ENCODE measurements at regions of chr3 and their contacts with region 1.

Region 1: DNA sequence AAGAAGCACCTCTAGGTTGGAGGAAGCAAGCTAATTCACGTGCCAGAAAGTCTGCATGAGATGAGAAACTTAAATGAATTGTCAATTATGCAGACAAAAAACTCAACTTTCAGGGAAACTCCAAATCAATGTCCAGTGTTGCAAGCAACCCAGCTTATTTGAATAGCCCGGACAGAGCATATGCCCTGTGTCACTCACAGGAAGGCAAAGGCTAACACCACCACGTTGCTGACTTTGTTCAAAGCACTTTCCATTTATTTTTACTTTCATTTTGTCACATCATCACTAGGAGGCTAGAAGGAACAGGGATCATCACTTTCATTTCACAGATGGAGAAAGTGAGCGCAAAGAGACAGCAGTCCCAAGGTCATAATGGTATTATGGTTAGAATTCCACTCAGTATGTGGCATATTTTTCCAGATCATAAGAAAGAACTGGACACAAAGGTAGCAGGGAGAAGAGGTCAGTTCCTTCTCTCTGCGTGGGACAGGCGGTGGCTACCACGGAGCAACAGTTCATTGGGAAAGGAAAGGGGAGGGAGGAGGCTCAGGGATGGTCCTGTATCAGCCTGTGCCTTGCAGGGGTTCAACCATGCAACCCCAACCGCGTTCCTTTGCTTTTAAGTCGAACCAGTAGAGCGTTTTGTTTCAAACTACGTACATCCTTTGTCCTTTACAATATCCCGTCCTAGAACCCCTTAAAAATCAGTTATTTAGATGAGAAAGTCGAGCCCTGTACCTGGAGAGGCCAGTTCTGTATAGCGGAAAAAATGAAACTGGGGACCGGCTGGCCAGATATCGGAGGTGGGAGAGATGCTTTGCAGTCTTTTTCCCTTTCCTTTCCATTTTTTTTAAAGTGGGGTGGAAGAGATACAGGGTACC is 1.1 kb downstream of the HEG1 start:
- DNase-seq: peak; percentile 62
- ATAC-seq: peak; percentile 61
- H3K4me3 ChIP-seq: peak overlapping the region; percentile 93
- H3K27ac ChIP-seq: peak overlapping the region; percentile 81
- H3K4me1 ChIP-seq: peaks cover 26% of the 10 kb centered on the region
- H3K27me3 ChIP-seq: no peaks in the 10 kb centered on the region
- CTCF ChIP-seq: no peak
- EP300 ChIP-seq: no peak
- POLR2A ChIP-seq: no peak
- RAD21 ChIP-seq: no peak

Region 2: GRCh38 chr3:124935264-124935663 is 119.4 kb before region 1 on chr3:
- CTCF ChIA-PET with region 1: interaction called, 3 read pairs
- POLR2A ChIA-PET with region 1: interaction called, 4 read pairs
- RAD21 ChIA-PET with region 1: interaction called, 39 read pairs
- SMC1A ChIA-PET with region 1: interaction called, 14 read pairs
- in situ Hi-C with region 1: no loop called
- intact Hi-C with region 1: no loop called
- DNase-seq: no peak
- ATAC-seq: peak; percentile 89
- H3K4me3 ChIP-seq: no peak overlapping the region
- H3K27ac ChIP-seq: no peak overlapping the region
- H3K4me1 ChIP-seq: no peaks in the 10 kb centered on the region
- H3K27me3 ChIP-seq: no peaks in the 10 kb centered on the region; a peak in 1 of 4 replicates
- CTCF ChIP-seq: no peak
- EP300 ChIP-seq: no peak
- POLR2A ChIP-seq: no peak
- RAD21 ChIP-seq: no peak

Region 3: GRCh38 chr3:125039131-125040100 is 15.3 kb before region 1 on chr3:
- CTCF ChIA-PET with region 1: interaction called, 10 read pairs
- POLR2A ChIA-PET with region 1: interaction called, 6 read pairs
- RAD21 ChIA-PET with region 1: no interaction called
- SMC1A ChIA-PET with region 1: interaction called, 7 read pairs
- in situ Hi-C with region 1: no loop called
- intact Hi-C with region 1: no loop called
- DNase-seq: no peak
- ATAC-seq: no peak
- H3K4me3 ChIP-seq: no peak overlapping the region
- H3K27ac ChIP-seq: no peak overlapping the region
- H3K4me1 ChIP-seq: peaks cover 4% of the 10 kb centered on the region
- H3K27me3 ChIP-seq: no peaks in the 10 kb centered on the region
- CTCF ChIP-seq: no peak
- EP300 ChIP-seq: no peak
- POLR2A ChIP-seq: no peak
- RAD21 ChIP-seq: no peak

Region 4: DNA sequence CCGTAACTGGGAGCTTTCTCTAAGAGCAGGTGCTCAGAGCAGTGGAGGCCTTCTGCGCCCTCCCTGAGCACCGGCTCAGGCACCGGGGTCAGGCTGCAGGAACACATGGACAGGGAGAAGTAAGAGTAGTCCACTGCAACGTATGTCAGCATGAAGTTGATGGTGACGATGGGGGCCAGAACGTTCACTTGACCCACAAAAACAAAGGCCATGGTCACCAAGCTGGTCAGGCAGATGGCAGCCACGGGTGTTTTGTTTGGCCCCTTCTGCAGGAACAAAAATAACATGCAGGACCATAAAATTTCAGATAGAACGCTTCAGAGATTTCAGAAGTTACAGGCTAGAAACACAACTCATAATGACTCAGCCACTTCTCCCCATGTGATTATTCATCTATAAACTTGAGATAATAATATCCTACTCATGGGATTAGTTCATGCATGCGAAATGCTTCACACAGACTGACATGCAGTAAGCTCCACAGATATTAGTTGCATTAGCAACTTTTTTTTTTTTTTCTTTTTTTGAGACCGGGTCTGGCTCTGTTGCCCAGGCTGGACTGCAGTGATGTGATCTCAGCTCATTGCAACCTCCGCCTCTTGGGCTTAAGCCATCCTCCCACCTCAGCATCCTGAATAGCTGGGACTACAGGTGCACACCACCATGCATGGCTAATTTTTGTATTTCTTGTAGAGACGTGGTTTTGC is 53.3 kb after region 1 on chr3:
- CTCF ChIA-PET with region 1: interaction called, 9 read pairs
- POLR2A ChIA-PET with region 1: interaction called, 4 read pairs
- RAD21 ChIA-PET with region 1: interaction called, 31 read pairs
- SMC1A ChIA-PET with region 1: interaction called, 33 read pairs
- in situ Hi-C with region 1: no loop called
- intact Hi-C with region 1: loop called (anchors 2 kb)
- DNase-seq: peak; percentile 86
- ATAC-seq: peak; percentile 73
- H3K4me3 ChIP-seq: peak overlapping the region; percentile 82
- H3K27ac ChIP-seq: peak overlapping the region; percentile 93
- H3K4me1 ChIP-seq: peaks cover 39% of the 10 kb centered on the region
- H3K27me3 ChIP-seq: no peaks in the 10 kb centered on the region
- CTCF ChIP-seq: no peak
- EP300 ChIP-seq: peak; percentile 8 to 65; a peak in 1 of 4 replicates
- POLR2A ChIP-seq: peak; percentile 62; the same call in 1 of the 2 replicates
- RAD21 ChIP-seq: no peak

Region 5: DNA sequence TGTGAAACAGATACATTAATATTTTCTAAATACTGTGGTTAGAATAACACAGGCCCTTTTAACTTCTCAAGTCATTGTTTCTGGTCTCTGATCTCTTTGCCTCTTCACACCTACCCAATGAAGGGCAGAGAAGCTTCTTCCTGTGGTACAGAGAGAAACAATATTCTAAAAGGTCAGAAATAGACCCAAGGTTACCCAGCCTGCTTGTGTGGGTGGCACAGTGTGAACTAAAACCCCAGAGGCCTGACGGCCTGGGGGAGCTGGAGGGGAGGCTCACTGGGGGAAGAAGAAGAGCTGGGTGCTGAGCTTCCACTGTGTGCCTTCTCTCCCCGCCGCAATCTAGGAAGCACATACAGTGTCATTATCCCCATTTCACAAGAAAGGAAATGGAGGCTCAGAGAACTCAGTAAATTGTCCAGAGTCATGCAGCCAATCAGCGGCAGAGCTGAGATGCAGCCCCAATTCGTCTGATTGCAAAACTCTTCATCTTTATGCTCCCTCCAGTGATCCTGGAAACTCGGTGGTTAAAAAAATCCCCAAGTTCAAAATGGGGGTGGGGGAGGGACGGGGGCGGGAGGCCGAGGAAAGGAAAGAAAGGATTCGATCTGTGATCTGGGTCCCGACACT is 65.2 kb after region 1 on chr3:
- CTCF ChIA-PET with region 1: interaction called, 4 read pairs
- POLR2A ChIA-PET with region 1: interaction called, 9 read pairs
- RAD21 ChIA-PET with region 1: interaction called, 18 read pairs
- SMC1A ChIA-PET with region 1: interaction called, 13 read pairs
- in situ Hi-C with region 1: no loop called
- intact Hi-C with region 1: no loop called
- DNase-seq: peak; percentile 87
- ATAC-seq: peak; percentile 80
- H3K4me3 ChIP-seq: peak overlapping the region; percentile 60
- H3K27ac ChIP-seq: peak overlapping the region; percentile 97
- H3K4me1 ChIP-seq: peaks cover 76% of the 10 kb centered on the region
- H3K27me3 ChIP-seq: no peaks in the 10 kb centered on the region
- CTCF ChIP-seq: no peak
- EP300 ChIP-seq: peak; percentile 18 to 68; a peak in 1 of 4 replicates
- POLR2A ChIP-seq: no peak; the same call in 1 of the 2 replicates
- RAD21 ChIP-seq: no peak

Region 6: GRCh38 chr3:125141596-125142419 is 87.1 kb after region 1 on chr3:
- CTCF ChIA-PET with region 1: interaction called, 6 read pairs
- POLR2A ChIA-PET with region 1: interaction called, 7 read pairs
- RAD21 ChIA-PET with region 1: interaction called, 9 read pairs
- SMC1A ChIA-PET with region 1: interaction called, 11 read pairs
- in situ Hi-C with region 1: no loop called
- intact Hi-C with region 1: loop called (anchors 2 kb)
- DNase-seq: no peak
- ATAC-seq: peak; percentile 88
- H3K4me3 ChIP-seq: peak overlapping the region; percentile 60; the same call in 1 of the 2 replicates
- H3K27ac ChIP-seq: peak overlapping the region; percentile 95
- H3K4me1 ChIP-seq: peaks cover 92% of the 10 kb centered on the region
- H3K27me3 ChIP-seq: no peaks in the 10 kb centered on the region
- CTCF ChIP-seq: peak; percentile 47 to 54 (median 54)
- EP300 ChIP-seq: peak; percentile 88; a peak in 3 of 4 replicates
- POLR2A ChIP-seq: peak; percentile 60; the same call in 1 of the 2 replicates
- RAD21 ChIP-seq: peak; percentile 46

Region 7: DNA sequence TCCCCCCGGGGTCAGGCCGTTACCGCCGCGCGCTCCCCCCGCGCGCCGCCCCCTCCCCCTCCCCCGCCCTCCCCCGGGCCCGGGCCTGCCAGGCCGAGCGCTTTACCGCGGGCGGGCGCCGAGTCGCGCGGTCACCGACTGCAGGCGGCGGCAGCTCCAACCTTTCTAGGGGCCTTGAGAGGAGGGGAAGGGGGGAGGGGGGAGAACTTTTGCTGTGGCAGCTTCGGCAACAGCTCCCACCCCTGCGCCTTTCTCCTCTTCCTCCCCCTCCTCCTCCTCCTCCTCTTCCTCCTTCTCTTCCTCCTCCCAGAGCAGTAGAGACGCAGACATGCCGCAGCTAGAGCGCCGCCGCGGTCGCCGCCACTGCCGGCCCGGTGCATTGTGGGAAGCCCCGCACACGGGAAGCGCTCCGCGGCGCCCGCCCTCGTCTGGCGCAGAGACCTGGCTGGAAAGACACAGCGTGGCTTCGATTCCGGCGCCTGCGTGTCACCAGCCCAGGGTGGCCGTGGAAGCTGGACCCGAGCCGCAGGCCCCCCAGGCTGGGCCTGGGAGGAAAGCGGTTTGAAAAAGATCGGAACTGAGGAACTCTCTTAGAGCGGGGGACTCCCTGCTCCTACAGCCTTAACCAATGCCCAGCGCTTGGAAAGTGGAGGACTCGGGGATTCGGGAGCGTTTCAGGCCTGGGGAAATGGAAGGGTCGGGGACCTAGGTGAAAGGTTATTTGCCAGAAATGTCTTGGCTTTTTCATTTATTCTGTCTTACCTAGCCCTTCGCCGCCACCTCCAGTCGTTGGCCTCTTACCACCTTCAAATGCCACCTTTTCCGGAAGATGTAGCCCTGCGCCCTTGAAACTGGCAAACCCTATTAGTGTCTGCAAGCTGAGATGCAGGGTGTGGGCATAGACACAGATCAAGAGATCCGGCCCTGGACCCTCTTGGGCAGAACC is 320.6 kb after region 1 on chr3 and contains the start of gene ZNF148:
- CTCF ChIA-PET with region 1: no interaction called
- POLR2A ChIA-PET with region 1: no interaction called
- RAD21 ChIA-PET with region 1: interaction called, 11 read pairs
- SMC1A ChIA-PET with region 1: no interaction called
- in situ Hi-C with region 1: no loop called
- intact Hi-C with region 1: no loop called
- DNase-seq: peak; percentile 59
- ATAC-seq: peak; percentile 91
- H3K4me3 ChIP-seq: peak within 1 kb of the TSS; percentile 90
- H3K27ac ChIP-seq: peak within 1 kb of the TSS; percentile 78
- H3K4me1 ChIP-seq: no peaks in the 10 kb centered on the region; the same call in 1 of the 2 replicates
- H3K27me3 ChIP-seq: no peaks in the 10 kb centered on the region
- CTCF ChIP-seq: peak in 1 of 3 experiments; percentile 9; a peak in 2 of 6 replicates
- EP300 ChIP-seq: 0 out of 4 replicates have a peak, but pooled peaks of 1 of the 2 experiments have one; percentile 26
- POLR2A ChIP-seq: peak; percentile 98
- RAD21 ChIP-seq: peak; percentile 4; the same call in 1 of the 2 replicates
- polyA plus RNA-seq, gene ZNF148: 8.6 to 9.4 TPM